Endothelial cell of umbilical vein (primary cell): ENCODE measurements at regions of chr1 and their contacts with region 1.

Region 1: GRCh38 chr1:43414634-43415223 is 25.0 kb downstream of the SZT2 start:
- DNase-seq: peak; percentile 81
- H3K4me3 ChIP-seq: no peak overlapping the region
- H3K27ac ChIP-seq: no peak overlapping the region
- H3K4me1 ChIP-seq: peaks cover 7% of the 10 kb centered on the region
- H3K27me3 ChIP-seq: no peaks in the 10 kb centered on the region
- CTCF ChIP-seq: peak; percentile 68 to 79
- POLR2A ChIP-seq: no peak

Region 2: GRCh38 chr1:42913426-42914091 is 501.2 kb before region 1 on chr1:
- CTCF ChIA-PET with region 1: interaction called, 16 read pairs
- POLR2A ChIA-PET with region 1: no interaction called
- dilution Hi-C with region 1: no loop called
- intact Hi-C with region 1: no loop called
- DNase-seq: peak; percentile 85
- H3K4me3 ChIP-seq: no peak overlapping the region
- H3K27ac ChIP-seq: no peak overlapping the region
- H3K4me1 ChIP-seq: no peaks in the 10 kb centered on the region
- H3K27me3 ChIP-seq: peaks cover 4% of the 10 kb centered on the region in 2 experiments
- CTCF ChIP-seq: peak; percentile 62 to 75
- POLR2A ChIP-seq: no peak

Region 3: GRCh38 chr1:43227143-43227764 is 187.5 kb before region 1 on chr1:
- CTCF ChIA-PET with region 1: interaction called, 269 read pairs
- POLR2A ChIA-PET with region 1: no interaction called
- dilution Hi-C with region 1: loop called (anchors 25 kb)
- intact Hi-C with region 1: loop called (anchors 1 kb)
- DNase-seq: peak; percentile 78
- H3K4me3 ChIP-seq: no peak overlapping the region
- H3K27ac ChIP-seq: no peak overlapping the region
- H3K4me1 ChIP-seq: peaks cover 7% of the 10 kb centered on the region
- H3K27me3 ChIP-seq: no peaks in the 10 kb centered on the region
- CTCF ChIP-seq: peak; percentile 84 to 97
- POLR2A ChIP-seq: no peak

Region 4: GRCh38 chr1:43300378-43301094 is 114.2 kb before region 1 on chr1 and contains the start of gene TIE1:
- CTCF ChIA-PET with region 1: interaction called, 9 read pairs
- POLR2A ChIA-PET with region 1: no interaction called
- dilution Hi-C with region 1: no loop called
- intact Hi-C with region 1: loop called (anchors 2 kb)
- DNase-seq: peak; percentile 94
- H3K4me3 ChIP-seq: peak within 1 kb of the TSS; percentile 47 to 96 (median 76)
- H3K27ac ChIP-seq: peak within 1 kb of the TSS; percentile 84
- H3K4me1 ChIP-seq: peaks cover 45% of the 10 kb centered on the region
- H3K27me3 ChIP-seq: no peaks in the 10 kb centered on the region
- CTCF ChIP-seq: no peak
- POLR2A ChIP-seq: peak; percentile 98
- total RNA-seq, gene TIE1: 562 and 620 TPM in 2 replicates

Region 5: GRCh38 chr1:43367904-43368645 is 46.7 kb before region 1 on chr1 and contains the start of gene ELOVL1:
- CTCF ChIA-PET with region 1: interaction called, 19 read pairs
- POLR2A ChIA-PET with region 1: no interaction called
- dilution Hi-C with region 1: no loop called
- intact Hi-C with region 1: loop called (anchors 2 kb)
- DNase-seq: peak; percentile 89
- H3K4me3 ChIP-seq: peak within 1 kb of the TSS; percentile 70 to 85 (median 72)
- H3K27ac ChIP-seq: peak within 1 kb of the TSS; percentile 57
- H3K4me1 ChIP-seq: peaks cover 30% of the 10 kb centered on the region
- H3K27me3 ChIP-seq: no peaks in the 10 kb centered on the region
- CTCF ChIP-seq: peak in 1 of 2 donors; percentile 38
- POLR2A ChIP-seq: peak; percentile 98
- total RNA-seq, gene ELOVL1: 126 and 134 TPM in 2 replicates

Region 6: DNA sequence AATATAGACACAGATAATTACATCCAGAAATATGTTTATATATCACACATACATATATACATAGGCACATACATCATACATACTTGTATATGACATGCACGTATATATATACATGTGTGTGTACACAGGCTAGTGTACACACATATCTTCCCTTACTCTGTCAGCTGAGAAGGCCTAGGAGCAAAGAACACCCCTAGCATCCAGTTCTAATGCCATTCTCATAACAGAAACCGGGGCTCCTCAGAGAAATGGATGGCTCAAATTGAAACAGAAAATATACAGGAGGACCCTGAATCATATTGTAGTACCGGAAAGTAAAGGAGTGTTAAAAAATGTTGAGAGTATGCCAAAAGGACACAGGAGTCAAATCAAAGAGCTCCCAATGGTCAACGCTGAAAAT is 58.7 kb after region 1 on chr1:
- CTCF ChIA-PET with region 1: interaction called, 4 read pairs
- POLR2A ChIA-PET with region 1: no interaction called
- dilution Hi-C with region 1: no loop called
- intact Hi-C with region 1: loop called (anchors 2 kb)
- DNase-seq: peak; percentile 46
- H3K4me3 ChIP-seq: peak overlapping the region in 1 of 3 experiments; percentile 53
- H3K27ac ChIP-seq: peak overlapping the region; percentile 100
- H3K4me1 ChIP-seq: peaks cover 60% of the 10 kb centered on the region
- H3K27me3 ChIP-seq: no peaks in the 10 kb centered on the region
- CTCF ChIP-seq: no peak
- POLR2A ChIP-seq: no peak